Activated T-helper 2 cell treated with anti-CD3 and anti-CD28 coated beads, Interferon-gamma antibody, Interleukin-2, Interleukin-4, amounts not matched to agents 10 μg/mL and 5 μg/mL and 100 μg/mL, durations not matched to agents 14 hours and 24 hours and 36 hours (primary cell): ENCODE measurements at regions of chr5 and their contacts with region 1.

Region 1: DNA sequence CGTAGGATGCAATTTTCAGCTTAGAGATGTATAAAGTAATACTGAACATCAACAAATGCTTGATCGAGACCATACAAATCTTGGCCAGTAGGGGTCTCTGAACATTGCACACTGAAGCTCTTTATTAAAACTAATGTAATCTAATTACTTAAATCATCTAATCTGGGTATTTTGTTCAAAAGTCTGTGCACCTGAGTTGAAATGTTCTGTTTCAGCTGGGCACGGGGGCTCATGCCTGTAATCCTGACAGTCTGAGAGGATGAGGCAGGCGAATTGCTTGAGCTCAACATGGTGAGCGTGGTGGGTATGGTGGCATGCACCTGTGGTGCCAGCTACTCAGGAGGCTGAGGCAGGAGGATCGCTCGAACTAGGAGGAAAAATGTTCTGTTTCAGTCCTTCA is 41.0 kb downstream of the ESM1 start:
- DNase-seq: no peak
- H3K4me3 Mint-ChIP-seq: no peak overlapping the region
- H3K27ac Mint-ChIP-seq: no peak overlapping the region
- H3K4me1 Mint-ChIP-seq: peaks cover 22% of the 10 kb centered on the region
- H3K27me3 Mint-ChIP-seq: no peaks in the 10 kb centered on the region

Region 2: DNA sequence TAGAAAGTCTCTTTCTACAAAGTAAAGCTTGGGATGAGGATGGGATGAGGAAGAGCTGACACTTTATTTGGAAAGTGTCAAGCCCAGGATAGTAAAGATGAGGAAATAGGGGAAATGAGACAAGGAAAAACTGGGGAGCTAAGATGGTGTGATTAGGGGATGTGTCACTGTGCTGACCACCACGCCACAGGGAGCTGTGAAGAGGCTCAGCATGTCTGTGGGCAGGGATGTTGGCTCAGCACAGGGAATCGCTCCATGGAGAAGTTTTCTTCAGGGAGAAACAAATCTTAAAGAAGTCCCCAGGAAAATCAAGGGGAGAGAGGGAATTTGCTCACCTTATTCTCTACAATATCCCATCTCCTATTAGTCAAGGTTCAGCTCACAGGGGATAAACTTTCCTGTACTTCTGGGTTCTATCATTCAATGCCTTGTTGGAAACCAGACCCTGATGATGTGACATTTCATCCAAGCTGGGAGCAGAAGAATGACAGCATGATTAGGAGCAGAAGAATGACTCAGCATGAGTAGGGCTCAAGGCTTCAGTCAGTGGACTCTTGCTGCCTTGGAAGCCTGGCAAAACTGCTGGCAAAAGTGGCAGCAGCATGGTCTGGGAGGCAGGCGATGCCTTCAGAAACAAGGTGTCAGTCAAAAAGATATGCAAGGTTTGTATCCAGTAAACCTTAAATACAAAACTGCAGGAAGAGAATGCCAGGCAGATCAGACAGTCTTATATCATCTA is 484.0 kb before region 1 on chr5:
- intact Hi-C with region 1: no loop called
- DNase-seq: no peak
- H3K4me3 Mint-ChIP-seq: no peak overlapping the region
- H3K27ac Mint-ChIP-seq: no peak overlapping the region
- H3K4me1 Mint-ChIP-seq: no peaks in the 10 kb centered on the region
- H3K27me3 Mint-ChIP-seq: peaks cover 10% of the 10 kb centered on the region

Region 3: DNA sequence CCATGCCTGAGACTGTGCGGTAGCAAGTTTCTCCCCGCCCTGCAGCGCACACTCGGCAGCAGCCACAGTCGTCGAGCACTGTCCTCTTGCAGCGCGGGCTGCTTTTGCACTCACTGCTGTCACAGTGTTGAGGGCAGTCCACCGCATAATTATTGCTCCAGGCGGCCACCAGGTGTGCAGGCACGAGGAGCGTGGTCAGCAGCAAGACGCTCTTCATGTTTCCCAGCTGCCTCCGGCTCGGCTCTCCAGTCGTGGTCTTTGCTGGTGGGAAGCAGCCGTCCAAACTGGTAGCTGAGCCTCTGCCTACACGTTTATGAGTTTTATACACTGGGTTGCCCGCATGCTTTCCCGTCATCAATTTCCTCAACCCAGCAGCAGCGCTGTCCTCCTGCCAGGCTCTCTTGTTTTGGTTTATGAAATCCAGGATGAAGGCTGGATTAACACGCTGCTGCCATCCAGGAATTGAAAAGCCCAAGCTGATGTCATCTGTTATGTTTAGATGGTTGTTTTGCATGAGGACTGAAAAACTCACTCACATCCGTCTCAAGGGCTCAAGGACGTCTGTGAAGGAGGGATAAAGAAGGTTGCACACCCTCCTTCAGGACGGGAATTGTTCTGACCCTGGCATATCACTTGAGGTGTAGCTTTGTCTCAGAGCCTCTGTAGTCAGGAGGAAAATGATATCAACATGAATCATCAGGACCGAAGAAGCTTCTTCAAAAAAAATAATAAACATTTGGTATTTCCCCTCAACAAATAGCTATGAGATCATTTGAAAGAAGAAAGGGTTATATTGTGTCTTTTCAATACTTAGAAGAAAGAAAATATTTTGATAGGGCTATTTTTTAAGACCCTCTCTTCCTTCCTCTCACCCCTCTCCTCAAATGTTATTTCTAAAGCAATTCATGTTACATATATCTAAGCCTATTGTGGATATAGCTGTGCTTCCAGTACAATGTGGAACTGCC is 41.2 kb after region 1 on chr5 and contains the start of gene ESM1:
- intact Hi-C with region 1: loop called (anchors 5 kb)
- DNase-seq: no peak
- H3K4me3 Mint-ChIP-seq: no peak within 1 kb of the TSS
- H3K27ac Mint-ChIP-seq: no peak within 1 kb of the TSS
- H3K4me1 Mint-ChIP-seq: peaks cover 71% of the 10 kb centered on the region
- H3K27me3 Mint-ChIP-seq: peaks cover 20% of the 10 kb centered on the region
- total RNA-seq, gene ESM1: 0.11 and 0.37 TPM in 2 replicates